Naive thymus-derived CD8-positive, alpha-beta T cell (primary cell): ENCODE measurements at regions of chr14 and their contacts with region 1.

Region 1: DNA sequence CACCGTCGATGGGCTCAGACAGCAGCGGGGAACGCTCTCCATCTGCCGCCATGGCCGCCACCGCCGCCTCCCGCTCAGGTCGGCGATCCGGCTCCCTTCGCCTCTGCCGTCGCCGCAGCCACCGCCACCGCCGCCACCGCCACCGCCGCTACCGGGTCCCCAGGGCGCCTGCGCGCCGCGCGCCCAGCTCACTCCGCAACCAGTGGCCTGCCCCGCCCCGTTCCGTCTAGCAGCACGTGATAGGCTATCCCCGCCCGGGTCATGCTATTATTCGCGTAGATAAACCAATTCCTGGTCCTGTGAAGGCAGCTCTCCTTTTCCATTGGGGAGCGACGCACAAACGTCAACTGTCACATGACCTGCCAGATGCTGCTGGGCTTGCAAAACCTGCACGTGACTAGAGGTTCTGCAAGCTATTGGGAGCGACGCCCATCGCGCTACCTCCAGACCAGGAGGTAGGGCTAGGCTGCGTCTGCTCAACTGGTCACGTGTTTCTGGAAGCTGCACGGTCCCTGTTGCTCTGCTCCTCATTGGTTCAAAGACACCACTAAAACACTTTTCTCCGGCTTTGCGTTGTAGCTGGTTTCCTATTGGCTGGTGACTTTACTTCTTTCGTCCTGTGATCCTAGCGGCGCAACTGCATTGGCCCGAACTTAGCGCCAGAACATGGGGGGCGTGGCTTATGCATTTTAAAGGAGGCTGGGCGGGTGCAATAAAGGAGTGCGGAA is at the start of gene PIP4P1:
- DNase-seq: peak; percentile 96 to 100 (median 98)
- ATAC-seq: peak; percentile 89
- H3K4me3 Mint-ChIP-seq: peak within 1 kb of the TSS; percentile 84 to 96 (median 92)
- H3K27ac Mint-ChIP-seq: peak within 1 kb of the TSS; percentile 86 to 99 (median 94)
- H3K4me1 Mint-ChIP-seq: peaks cover 24 to 43% (median 28%) of the 10 kb centered on the region in 4 donors
- H3K27me3 Mint-ChIP-seq: no peaks in the 10 kb centered on the region
- polyA plus RNA-seq, gene PIP4P1: 21.0 to 31.1 (median 21.3) TPM

Region 2: GRCh38 chr14:20228681-20229080 is 232.8 kb before region 1 on chr14 and contains the start of gene OR11H7:
- POLR2A ChIA-PET with region 1: no interaction called
- DNase-seq: no peak
- ATAC-seq: no peak
- H3K4me3 Mint-ChIP-seq: no peak within 1 kb of the TSS
- H3K27ac Mint-ChIP-seq: no peak within 1 kb of the TSS
- H3K4me1 Mint-ChIP-seq: no peaks in the 10 kb centered on the region
- H3K27me3 Mint-ChIP-seq: peaks cover 5 to 16% (median 11%) of the 10 kb centered on the region in 5 donors
- polyA plus RNA-seq, gene OR11H7: not detected

Region 3: GRCh38 chr14:20413045-20413799 is 48.2 kb before region 1 on chr14 and contains the start of gene TEP1:
- POLR2A ChIA-PET with region 1: interaction called, 44 read pairs
- DNase-seq: peak; percentile 45 to 79 (median 64)
- ATAC-seq: peak; percentile 69 to 84
- H3K4me3 Mint-ChIP-seq: peak within 1 kb of the TSS; percentile 90 to 100 (median 96)
- H3K27ac Mint-ChIP-seq: peak within 1 kb of the TSS; percentile 84 to 99 (median 96)
- H3K4me1 Mint-ChIP-seq: peaks cover 22 to 63% (median 47%) of the 10 kb centered on the region in 4 donors
- H3K27me3 Mint-ChIP-seq: no peaks in the 10 kb centered on the region
- polyA plus RNA-seq, gene TEP1: 3.0 to 4.9 (median 4.5) TPM

Region 4: DNA sequence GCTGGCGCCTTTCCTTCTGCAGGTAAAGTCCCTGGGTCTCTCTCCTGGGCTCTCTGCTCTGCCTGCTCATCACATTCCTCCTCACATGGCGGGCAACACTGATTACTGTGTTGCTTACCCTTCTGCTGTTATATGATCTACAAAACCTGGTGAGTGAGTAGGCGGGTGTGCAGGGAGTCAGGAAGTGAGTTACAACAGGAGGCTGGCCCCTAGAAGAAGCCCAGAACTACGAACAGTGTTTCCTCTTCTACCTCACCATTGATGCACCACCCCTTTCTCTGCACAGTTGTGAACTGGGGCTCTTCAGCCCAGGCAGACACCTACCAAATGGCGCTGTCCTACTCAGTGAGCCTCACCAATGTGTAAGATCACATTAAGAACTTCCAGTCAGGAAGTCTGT is 20.6 kb before region 1 on chr14:
- POLR2A ChIA-PET with region 1: interaction called, 21 read pairs
- DNase-seq: peak in 9 of 10 donors; percentile 12 to 79 (median 47)
- ATAC-seq: peak; percentile 96 to 98
- H3K4me3 Mint-ChIP-seq: peak overlapping the region; percentile 70 to 87 (median 82)
- H3K27ac Mint-ChIP-seq: peak overlapping the region; percentile 88 to 98 (median 94)
- H3K4me1 Mint-ChIP-seq: peaks cover 22 to 44% (median 31%) of the 10 kb centered on the region in 4 donors
- H3K27me3 Mint-ChIP-seq: no peaks in the 10 kb centered on the region

Region 5: GRCh38 chr14:20477211-20477876 is 15.9 kb after region 1 on chr14:
- POLR2A ChIA-PET with region 1: interaction called, 63 read pairs
- DNase-seq: peak in 6 of 10 donors; percentile 20 to 63 (median 45)
- ATAC-seq: peak; percentile 76 to 83
- H3K4me3 Mint-ChIP-seq: peak overlapping the region; percentile 47 to 87 (median 72)
- H3K27ac Mint-ChIP-seq: peak overlapping the region; percentile 88 to 98 (median 92)
- H3K4me1 Mint-ChIP-seq: peaks cover 43 to 87% (median 85%) of the 10 kb centered on the region in 4 donors
- H3K27me3 Mint-ChIP-seq: no peaks in the 10 kb centered on the region

Region 6: GRCh38 chr14:20489093-20489994 is 27.9 kb after region 1 on chr14:
- POLR2A ChIA-PET with region 1: interaction called, 23 read pairs
- DNase-seq: peak in 4 of 10 donors; percentile 17 to 45 (median 28)
- ATAC-seq: peak; percentile 79 to 89
- H3K4me3 Mint-ChIP-seq: peak overlapping the region; percentile 36 to 84 (median 76)
- H3K27ac Mint-ChIP-seq: peak overlapping the region; percentile 47 to 95 (median 86)
- H3K4me1 Mint-ChIP-seq: peaks cover 42 to 86% (median 72%) of the 10 kb centered on the region in 4 donors
- H3K27me3 Mint-ChIP-seq: no peaks in the 10 kb centered on the region

Region 7: DNA sequence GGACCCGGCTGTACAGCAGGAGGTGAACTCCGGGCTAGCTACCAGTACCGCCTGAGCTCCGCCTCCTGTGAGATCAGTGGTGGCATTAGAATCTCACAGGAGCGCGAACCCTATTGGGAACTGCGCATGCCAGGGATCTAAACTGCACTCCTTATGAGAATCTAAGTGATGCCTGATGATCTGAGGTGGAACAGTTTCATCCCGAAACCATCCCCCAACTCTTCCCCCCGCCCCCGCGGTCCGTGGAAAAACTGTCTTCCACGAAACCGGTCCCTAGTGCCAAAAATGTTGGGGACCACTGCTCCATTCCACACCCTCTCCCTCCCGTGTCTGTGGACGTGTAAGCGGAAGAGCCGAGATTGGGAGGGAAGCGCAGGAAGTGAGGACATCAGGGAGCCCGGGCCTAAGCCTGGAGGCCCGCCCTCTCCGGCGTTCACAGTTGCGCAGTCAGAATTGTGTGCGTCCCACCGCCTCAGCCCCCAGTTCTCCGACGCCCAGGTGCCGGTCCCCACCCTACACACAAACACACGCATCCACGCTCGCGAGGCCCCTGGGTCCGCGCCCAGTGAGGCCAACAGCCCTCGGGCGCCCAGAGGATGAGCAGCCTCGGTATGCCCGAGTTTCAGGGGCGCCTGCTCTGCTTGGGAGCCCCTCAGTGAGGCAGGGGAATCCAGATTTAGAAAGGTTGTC is 221.1 kb after region 1 on chr14:
- POLR2A ChIA-PET with region 1: interaction called, 31 read pairs
- DNase-seq: peak; percentile 71 to 91 (median 80)
- ATAC-seq: peak; percentile 61 to 70
- H3K4me3 Mint-ChIP-seq: no peak overlapping the region
- H3K27ac Mint-ChIP-seq: no peak overlapping the region
- H3K4me1 Mint-ChIP-seq: peaks cover 8 to 33% (median 15%) of the 10 kb centered on the region in 4 donors
- H3K27me3 Mint-ChIP-seq: peaks cover 0 to 5% (median 0%) of the 10 kb centered on the region in 5 donors